Activated CD4-positive, alpha-beta memory T cell treated with anti-CD3 and anti-CD28 coated beads for 36 hours (primary cell): ENCODE measurements at regions of chr20 and their contacts with region 1.

Region 1: DNA sequence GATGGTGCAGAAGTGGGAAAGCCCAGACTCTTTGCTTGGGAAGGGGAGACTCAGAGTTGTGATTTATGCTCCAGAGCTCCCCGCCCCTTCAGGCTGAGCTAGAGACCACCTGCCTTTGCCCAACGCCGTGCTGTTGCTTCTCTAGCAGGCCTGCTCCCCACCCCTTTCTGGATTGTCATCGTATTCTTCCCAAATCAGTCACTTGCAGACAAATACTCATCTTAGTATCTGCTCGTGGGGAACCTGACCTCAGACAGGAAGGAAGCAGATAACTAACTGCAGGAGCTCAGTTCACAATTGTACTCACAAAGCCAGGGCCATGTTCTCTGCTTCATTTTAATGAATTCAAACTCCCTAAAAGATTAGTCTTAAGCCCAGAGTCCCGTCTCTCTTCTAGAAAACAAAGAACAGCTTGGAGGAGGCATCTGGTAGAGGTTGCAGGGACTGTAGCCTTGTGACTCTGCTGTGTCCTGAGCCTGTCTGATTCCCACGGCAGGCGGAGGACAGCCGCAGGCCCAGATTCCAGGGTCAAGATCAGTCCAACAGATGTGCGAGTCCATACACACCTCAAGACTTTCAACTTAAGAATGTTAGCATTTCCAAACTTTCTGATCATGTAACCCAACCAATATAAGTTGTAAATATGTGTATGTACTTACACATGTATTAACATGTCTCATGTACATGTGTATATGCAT is 57.2 kb upstream of the GGTLC1 start:
- DNase-seq: peak; percentile 62
- H3K4me3 Mint-ChIP-seq: no peak overlapping the region
- H3K27ac Mint-ChIP-seq: no peak overlapping the region
- H3K4me1 Mint-ChIP-seq: peaks cover 43% of the 10 kb centered on the region
- H3K27me3 Mint-ChIP-seq: no peaks in the 10 kb centered on the region

Region 2: DNA sequence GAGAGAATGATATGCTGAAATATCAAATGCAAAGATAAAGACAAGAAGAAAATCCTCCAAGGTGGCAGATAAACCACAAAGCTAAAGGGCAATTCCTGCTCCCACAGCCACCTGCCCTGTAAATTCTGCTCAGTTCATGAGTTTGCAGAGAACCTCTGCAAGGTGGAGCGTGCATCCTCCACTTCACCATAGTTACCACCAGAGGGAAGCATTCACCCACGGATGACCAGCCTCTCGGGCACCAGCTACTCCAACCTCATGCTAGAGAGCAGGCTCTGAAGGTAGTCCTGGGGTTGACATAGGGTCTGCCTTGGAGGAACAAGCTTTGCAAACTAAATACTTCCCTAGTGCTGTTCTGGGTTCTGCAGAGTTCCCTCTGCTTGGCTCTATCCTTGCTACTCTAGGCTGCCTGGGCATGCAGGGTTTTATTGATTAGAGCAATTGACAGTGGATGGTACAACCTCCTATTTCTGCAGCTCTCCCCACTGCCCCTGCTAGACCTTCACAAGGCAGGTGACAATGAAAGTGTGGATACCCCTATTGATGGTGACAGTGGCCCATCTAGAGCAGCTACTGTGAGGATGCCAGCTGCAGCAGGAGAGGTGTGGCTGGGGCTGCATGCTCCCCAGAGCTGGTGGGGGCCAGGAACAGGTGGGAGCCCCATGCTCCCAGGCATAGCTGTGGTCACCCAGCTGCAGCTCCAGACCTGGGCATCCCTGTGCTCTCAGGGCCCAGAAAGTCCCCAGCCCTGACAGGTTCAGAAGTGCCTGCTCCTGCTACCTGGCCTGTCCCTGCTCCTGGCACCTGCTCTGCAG is 108.3 kb before region 1 on chr20:
- CTCF ChIA-PET with region 1: no interaction called
- POLR2A ChIA-PET with region 1: no interaction called
- intact Hi-C with region 1: no loop called
- DNase-seq: peak; percentile 70
- H3K4me3 Mint-ChIP-seq: no peak overlapping the region
- H3K27ac Mint-ChIP-seq: no peak overlapping the region
- H3K4me1 Mint-ChIP-seq: no peaks in the 10 kb centered on the region
- H3K27me3 Mint-ChIP-seq: no peaks in the 10 kb centered on the region

Region 3: DNA sequence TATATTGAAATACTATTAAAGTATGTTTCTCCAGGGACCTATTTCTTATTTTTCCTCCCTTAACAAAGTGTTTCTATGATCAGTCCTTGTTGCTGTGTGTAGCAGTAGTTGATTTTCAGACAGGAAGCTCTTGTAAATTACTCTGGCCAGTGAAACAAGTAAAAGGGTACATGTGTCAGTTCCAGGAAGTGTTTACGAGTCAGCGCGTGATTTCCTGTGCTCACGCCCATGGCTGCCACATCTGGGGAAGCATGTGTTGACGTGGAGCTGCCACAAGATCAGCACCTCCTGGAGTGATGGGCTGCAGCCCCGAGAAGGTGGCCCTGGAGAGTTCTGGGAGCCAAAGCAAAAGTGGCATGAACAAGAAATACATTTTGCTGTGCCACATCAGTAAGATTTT is 18.5 kb before region 1 on chr20:
- CTCF ChIA-PET with region 1: interaction called, 3 read pairs
- POLR2A ChIA-PET with region 1: interaction called, 10 read pairs
- intact Hi-C with region 1: loop called (anchors 1 kb)
- DNase-seq: peak; percentile 88
- H3K4me3 Mint-ChIP-seq: peak overlapping the region; percentile 48
- H3K27ac Mint-ChIP-seq: peak overlapping the region; percentile 88
- H3K4me1 Mint-ChIP-seq: peaks cover 32% of the 10 kb centered on the region
- H3K27me3 Mint-ChIP-seq: no peaks in the 10 kb centered on the region

Region 4: DNA sequence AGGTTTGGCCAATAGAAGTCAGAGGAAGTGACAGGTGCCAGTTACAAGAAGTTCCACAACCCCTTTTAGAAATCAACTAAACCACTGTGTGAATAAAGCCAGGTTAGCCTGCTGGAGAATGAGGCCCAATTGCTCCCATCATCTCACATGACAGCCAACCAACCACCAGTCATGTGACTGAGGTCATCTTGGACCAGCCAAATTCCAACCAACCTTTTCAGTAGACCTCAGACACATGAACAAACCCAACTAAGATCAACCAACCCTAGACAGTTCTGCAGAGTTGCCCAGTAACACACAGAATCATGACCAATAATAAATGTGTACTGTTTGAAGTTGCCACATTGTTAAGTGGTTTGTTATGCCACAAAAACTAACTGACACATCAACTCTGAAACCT is 12.6 kb before region 1 on chr20:
- CTCF ChIA-PET with region 1: interaction called, 3 read pairs
- POLR2A ChIA-PET with region 1: interaction called, 10 read pairs
- intact Hi-C with region 1: loop called (anchors 1 kb)
- DNase-seq: peak; percentile 47
- H3K4me3 Mint-ChIP-seq: no peak overlapping the region
- H3K27ac Mint-ChIP-seq: peak overlapping the region; percentile 53
- H3K4me1 Mint-ChIP-seq: peaks cover 20% of the 10 kb centered on the region
- H3K27me3 Mint-ChIP-seq: no peaks in the 10 kb centered on the region

Region 5: GRCh38 chr20:24066076-24066700 is 20.4 kb after region 1 on chr20:
- CTCF ChIA-PET with region 1: no interaction called
- POLR2A ChIA-PET with region 1: no interaction called
- intact Hi-C with region 1: loop called (anchors 2 kb)
- DNase-seq: peak; percentile 36
- H3K4me3 Mint-ChIP-seq: peak overlapping the region; percentile 36
- H3K27ac Mint-ChIP-seq: peak overlapping the region; percentile 57
- H3K4me1 Mint-ChIP-seq: peaks cover 11% of the 10 kb centered on the region
- H3K27me3 Mint-ChIP-seq: no peaks in the 10 kb centered on the region

Region 6: GRCh38 chr20:24166123-24166381 is 120.3 kb after region 1 on chr20:
- CTCF ChIA-PET with region 1: no interaction called
- POLR2A ChIA-PET with region 1: no interaction called
- intact Hi-C with region 1: no loop called
- DNase-seq: no peak
- H3K4me3 Mint-ChIP-seq: no peak overlapping the region
- H3K27ac Mint-ChIP-seq: no peak overlapping the region
- H3K4me1 Mint-ChIP-seq: no peaks in the 10 kb centered on the region
- H3K27me3 Mint-ChIP-seq: no peaks in the 10 kb centered on the region